CD4-positive, alpha-beta T cell (primary cell): ENCODE measurements at regions of chr1 and their contacts with region 1.

Region 1: DNA sequence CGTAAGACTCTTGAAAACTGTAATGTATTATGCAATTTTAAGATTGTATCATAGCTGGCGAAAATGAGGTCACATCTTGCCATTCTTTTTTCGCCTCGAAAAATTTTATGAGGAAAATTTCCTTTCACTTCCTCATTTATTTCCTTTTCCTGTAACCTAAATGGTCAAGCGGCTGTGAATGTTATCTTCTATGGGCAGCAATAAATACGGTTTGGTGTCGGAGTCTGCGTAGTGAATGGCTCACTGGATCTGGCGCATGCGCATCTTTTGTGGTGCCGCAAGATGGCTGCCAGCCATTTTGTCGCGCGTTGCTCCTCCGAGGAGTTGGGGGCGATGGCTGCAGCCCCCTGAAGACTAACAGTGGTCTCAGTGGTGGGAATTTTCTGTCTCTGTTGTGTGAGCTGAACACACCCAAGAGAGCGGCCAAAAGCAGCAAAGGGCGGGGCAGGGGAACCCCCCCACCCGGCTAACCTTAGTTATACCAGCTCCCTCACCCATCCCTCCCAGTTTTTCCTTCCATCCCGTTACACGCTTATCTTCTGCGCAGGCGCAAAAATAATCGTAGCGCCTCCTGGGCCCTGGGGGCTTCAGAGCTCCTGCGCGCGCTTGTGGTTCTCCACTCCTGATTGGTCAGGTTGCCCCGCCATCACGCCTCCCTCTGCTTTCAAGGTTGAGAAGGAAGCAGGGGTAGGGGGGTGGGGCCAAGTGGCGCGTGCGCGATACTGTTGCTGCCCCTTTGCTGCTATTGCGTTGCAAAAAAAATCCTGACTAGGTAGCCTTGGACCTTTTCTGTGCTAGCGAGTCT is at the start of gene RPRD2:
- DNase-seq: peak; percentile 95 to 100 (median 99)
- ATAC-seq: peak; percentile 93
- H3K4me3 ChIP-seq: peak within 1 kb of the TSS; percentile 70
- H3K4me3 Mint-ChIP-seq: peak within 1 kb of the TSS; percentile 100
- H3K27ac ChIP-seq: peak within 1 kb of the TSS; percentile 93 to 97
- H3K27ac Mint-ChIP-seq: peak within 1 kb of the TSS; percentile 96
- H3K4me1 ChIP-seq: peaks cover 17% of the 10 kb centered on the region
- H3K4me1 Mint-ChIP-seq: peaks cover 37% of the 10 kb centered on the region
- H3K27me3 ChIP-seq: no peaks in the 10 kb centered on the region
- H3K27me3 Mint-ChIP-seq: no peaks in the 10 kb centered on the region
- CTCF ChIP-seq: no peak
- total RNA-seq, gene RPRD2: 27.1 to 27.9 TPM

Region 2: GRCh38 chr1:150281837-150282653 is 81.6 kb before region 1 on chr1 and contains the start of gene CIART:
- CTCF ChIA-PET with region 1: no interaction called
- POLR2A ChIA-PET with region 1: interaction called, 22 read pairs
- intact Hi-C with region 1: no loop called
- DNase-seq: peak; percentile 55 to 95 (median 74)
- ATAC-seq: peak; percentile 84
- H3K4me3 ChIP-seq: peak within 1 kb of the TSS; percentile 63
- H3K4me3 Mint-ChIP-seq: peak within 1 kb of the TSS; percentile 82
- H3K27ac ChIP-seq: peak within 1 kb of the TSS; percentile 17 to 49
- H3K27ac Mint-ChIP-seq: peak within 1 kb of the TSS; percentile 87
- H3K4me1 ChIP-seq: peaks cover 24% of the 10 kb centered on the region
- H3K4me1 Mint-ChIP-seq: peaks cover 32% of the 10 kb centered on the region
- H3K27me3 ChIP-seq: no peaks in the 10 kb centered on the region
- H3K27me3 Mint-ChIP-seq: no peaks in the 10 kb centered on the region
- CTCF ChIP-seq: no peak
- total RNA-seq, gene CIART: 4.0 to 4.5 TPM

Region 3: DNA sequence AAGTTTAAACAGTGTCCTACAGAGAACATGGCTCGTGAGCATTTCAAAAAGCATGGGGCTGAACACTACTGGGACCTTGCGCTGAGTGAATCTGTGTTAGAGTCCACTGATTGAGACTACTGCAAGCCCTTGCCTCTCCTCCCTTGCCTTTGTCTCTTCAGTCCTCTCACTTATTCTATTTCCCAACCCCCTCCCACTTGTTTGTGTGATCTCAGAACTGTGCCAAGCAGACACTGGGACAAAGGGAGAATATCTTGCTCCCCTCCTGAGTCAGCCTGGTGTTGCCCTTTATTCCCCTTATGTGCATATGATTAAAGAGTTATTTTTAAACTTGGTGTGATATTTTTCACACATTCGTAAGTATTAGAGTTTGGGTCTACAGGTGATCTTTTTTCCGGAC is 10.8 kb before region 1 on chr1:
- CTCF ChIA-PET with region 1: no interaction called
- POLR2A ChIA-PET with region 1: interaction called, 18 read pairs
- intact Hi-C with region 1: no loop called
- DNase-seq: no peak
- ATAC-seq: no peak
- H3K4me3 ChIP-seq: no peak overlapping the region
- H3K4me3 Mint-ChIP-seq: no peak overlapping the region
- H3K27ac ChIP-seq: no peak overlapping the region
- H3K27ac Mint-ChIP-seq: no peak overlapping the region
- H3K4me1 ChIP-seq: no peaks in the 10 kb centered on the region
- H3K4me1 Mint-ChIP-seq: no peaks in the 10 kb centered on the region
- H3K27me3 ChIP-seq: no peaks in the 10 kb centered on the region
- H3K27me3 Mint-ChIP-seq: no peaks in the 10 kb centered on the region
- CTCF ChIP-seq: no peak

Region 4: DNA sequence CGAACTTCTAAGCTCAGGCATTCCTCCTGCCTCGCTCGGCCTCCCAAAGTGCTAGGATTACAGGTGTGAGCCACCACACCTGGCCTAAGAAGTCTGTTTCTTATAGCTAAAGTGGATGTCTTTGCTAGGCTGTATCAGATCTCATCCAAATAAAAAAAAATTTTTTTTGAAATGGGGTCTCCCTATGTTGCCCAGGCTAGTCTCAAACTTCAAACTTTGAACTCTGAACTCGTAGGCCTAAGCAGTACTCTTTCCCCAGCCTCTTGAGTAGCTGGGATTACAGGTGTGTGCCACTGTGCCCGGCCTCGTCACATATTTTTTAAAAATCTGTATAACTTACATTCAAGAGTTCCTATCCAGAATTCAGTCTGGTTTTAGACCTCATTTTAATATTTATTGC is 40.8 kb after region 1 on chr1:
- CTCF ChIA-PET with region 1: no interaction called
- POLR2A ChIA-PET with region 1: interaction called, 3 read pairs
- intact Hi-C with region 1: loop called in 1 of 2 experiments (anchors 5 kb)
- DNase-seq: no peak
- ATAC-seq: no peak
- H3K4me3 ChIP-seq: no peak overlapping the region
- H3K4me3 Mint-ChIP-seq: no peak overlapping the region
- H3K27ac ChIP-seq: no peak overlapping the region
- H3K27ac Mint-ChIP-seq: peak overlapping the region; percentile 5
- H3K4me1 ChIP-seq: peaks cover 12% of the 10 kb centered on the region
- H3K4me1 Mint-ChIP-seq: peaks cover 73% of the 10 kb centered on the region
- H3K27me3 ChIP-seq: no peaks in the 10 kb centered on the region
- H3K27me3 Mint-ChIP-seq: no peaks in the 10 kb centered on the region
- CTCF ChIP-seq: no peak

Region 5: GRCh38 chr1:150561974-150562445 is 198.4 kb after region 1 on chr1:
- CTCF ChIA-PET with region 1: no interaction called
- POLR2A ChIA-PET with region 1: interaction called, 37 read pairs
- intact Hi-C with region 1: no loop called
- DNase-seq: peak; percentile 69 to 93 (median 84)
- ATAC-seq: peak; percentile 47
- H3K4me3 ChIP-seq: peak overlapping the region; percentile 90
- H3K4me3 Mint-ChIP-seq: peak overlapping the region; percentile 96
- H3K27ac ChIP-seq: peak overlapping the region; percentile 92 to 97
- H3K27ac Mint-ChIP-seq: peak overlapping the region; percentile 98
- H3K4me1 ChIP-seq: peaks cover 89% of the 10 kb centered on the region
- H3K4me1 Mint-ChIP-seq: peaks cover 63% of the 10 kb centered on the region
- H3K27me3 ChIP-seq: no peaks in the 10 kb centered on the region
- H3K27me3 Mint-ChIP-seq: no peaks in the 10 kb centered on the region
- CTCF ChIP-seq: no peak

Region 6: DNA sequence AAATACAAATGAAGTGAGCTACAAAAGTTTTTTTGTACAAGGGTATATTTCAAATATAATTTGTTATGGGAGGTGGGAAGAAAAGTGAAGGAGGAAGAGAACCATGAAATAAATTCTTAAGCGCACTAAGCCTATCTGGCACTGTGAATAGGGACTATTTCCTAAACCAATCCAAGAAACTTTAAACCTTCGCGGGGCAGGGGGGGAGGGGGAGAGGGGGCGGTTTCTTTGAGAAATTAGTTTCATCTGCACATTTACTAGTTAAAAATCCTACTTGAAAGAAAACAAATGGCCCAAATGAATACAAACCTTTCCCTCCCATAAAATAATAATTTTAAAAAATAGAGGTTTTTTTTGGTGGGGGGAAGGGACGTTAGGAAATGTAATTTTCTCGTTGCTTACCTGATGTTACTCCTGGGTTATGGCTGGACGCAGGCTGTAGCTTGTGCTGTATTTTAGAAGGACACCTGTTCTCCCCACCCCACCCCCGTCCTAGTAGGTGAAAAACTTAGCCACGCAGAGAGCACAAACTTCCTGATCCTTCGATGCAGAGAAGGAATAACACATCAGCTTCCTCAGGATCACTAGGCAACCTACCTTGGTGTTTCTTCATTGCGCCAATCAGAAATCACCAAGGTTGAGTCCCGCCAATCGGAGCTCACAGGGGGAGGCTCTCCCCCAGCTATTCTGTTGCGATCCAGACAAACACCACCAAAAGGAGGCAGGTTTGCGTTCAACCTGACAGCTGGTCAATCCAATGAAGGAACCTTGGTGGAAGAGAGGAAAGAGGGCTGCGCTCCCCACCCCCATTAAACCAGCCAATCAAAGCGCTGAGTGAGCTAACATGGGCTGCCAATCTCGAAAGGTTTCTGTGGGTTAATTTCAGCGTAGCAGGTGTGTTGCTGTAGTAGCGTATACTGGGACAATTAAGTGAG is 333.2 kb after region 1 on chr1 and contains the start of gene GOLPH3L:
- CTCF ChIA-PET with region 1: no interaction called
- POLR2A ChIA-PET with region 1: interaction called, 13 read pairs
- intact Hi-C with region 1: no loop called
- DNase-seq: peak; percentile 73 to 98 (median 83)
- ATAC-seq: peak; percentile 99
- H3K4me3 ChIP-seq: peak within 1 kb of the TSS; percentile 69
- H3K4me3 Mint-ChIP-seq: peak within 1 kb of the TSS; percentile 94
- H3K27ac ChIP-seq: peak within 1 kb of the TSS; percentile 39 to 62
- H3K27ac Mint-ChIP-seq: peak within 1 kb of the TSS; percentile 88
- H3K4me1 ChIP-seq: no peaks in the 10 kb centered on the region
- H3K4me1 Mint-ChIP-seq: peaks cover 40% of the 10 kb centered on the region
- H3K27me3 ChIP-seq: no peaks in the 10 kb centered on the region
- H3K27me3 Mint-ChIP-seq: peaks cover 4% of the 10 kb centered on the region
- CTCF ChIP-seq: no peak
- total RNA-seq, gene GOLPH3L: 2.4 to 2.6 TPM